ENCODE measurements at regions of chr16 and their contacts with region 1.

Region 1: DNA sequence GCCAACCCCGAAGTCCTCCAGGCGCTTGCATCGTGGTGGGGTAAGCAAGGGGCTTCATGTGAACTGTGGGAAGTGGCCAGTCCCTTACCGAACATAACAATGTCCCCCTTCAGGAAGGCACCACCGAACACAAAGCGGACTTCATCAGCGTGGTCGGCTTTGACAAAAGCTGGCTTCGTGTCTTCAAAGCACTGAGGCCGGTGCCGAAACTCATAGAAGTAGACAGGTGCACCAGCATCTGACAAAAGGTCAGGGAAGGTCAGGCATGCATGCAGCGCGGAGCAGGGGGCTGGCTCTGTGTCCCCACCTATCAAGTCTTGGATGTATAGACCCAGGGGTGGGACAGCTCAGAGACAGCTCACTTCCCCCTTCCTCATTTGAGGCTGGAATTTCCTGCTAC is 16.6 kb upstream of the CES1 start:
- DNase-seq: no peak
- ATAC-seq: no peak
- H3K4me3 ChIP-seq: no peak overlapping the region
- H3K27ac ChIP-seq: no peak overlapping the region
- H3K4me1 ChIP-seq: no peaks in the 10 kb centered on the region
- H3K27me3 ChIP-seq: peaks cover 0 to 15% (median 0%) of the 10 kb centered on the region in 4 donors
- CTCF ChIP-seq: no peak

Region 2: GRCh38 chr16:55711959-55712876 is 137.3 kb before region 1 on chr16:
- intact Hi-C with region 1: loop called in 2 of 3 experiments (anchors 5 kb)
- DNase-seq: peak in 5 of 6 donors; percentile 38 to 81 (median 63)
- ATAC-seq: peak; percentile 61 to 90 (median 86)
- H3K4me3 ChIP-seq: no peak overlapping the region
- H3K27ac ChIP-seq: no peak overlapping the region
- H3K4me1 ChIP-seq: no peaks in the 10 kb centered on the region
- H3K27me3 ChIP-seq: no peaks in the 10 kb centered on the region
- CTCF ChIP-seq: peak; percentile 33 to 62 (median 52)